ENCODE measurements at regions of chr13 and their contacts with region 1.

Region 1: GRCh38 chr13:50529154-50529882 is 314.2 kb downstream of the DLEU7 start:
- DNase-seq: peak; percentile 90
- ATAC-seq: peak; percentile 92 to 96

Region 2: GRCh38 chr13:50130123-50130946 is 399.0 kb before region 1 on chr13:
- intact Hi-C with region 1: loop called in 1 of 2 experiments (anchors 2 kb)
- DNase-seq: peak; percentile 50
- ATAC-seq: peak; percentile 23 to 38

Region 3: DNA sequence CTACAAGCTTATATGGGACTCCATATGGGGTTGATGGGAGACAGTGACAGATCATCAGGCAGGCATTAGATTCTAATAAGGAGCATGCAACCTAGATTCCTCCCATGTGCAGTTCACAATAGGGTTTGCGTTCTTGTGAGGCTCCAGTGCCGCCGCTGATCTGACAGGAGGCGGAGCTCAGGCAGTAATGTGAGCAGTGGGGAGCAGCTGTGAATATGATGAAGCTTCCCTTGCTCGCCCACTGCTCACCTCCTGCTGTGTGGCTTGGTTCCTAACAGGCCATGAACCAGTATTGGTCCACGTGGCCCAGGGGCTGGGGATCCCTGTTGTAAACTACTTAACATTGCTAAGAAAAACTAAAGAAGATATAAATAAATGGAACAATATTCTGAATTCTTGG is 135.7 kb before region 1 on chr13:
- intact Hi-C with region 1: loop called in 1 of 2 experiments (anchors 10 kb)
- DNase-seq: no peak
- ATAC-seq: no peak

Region 4: DNA sequence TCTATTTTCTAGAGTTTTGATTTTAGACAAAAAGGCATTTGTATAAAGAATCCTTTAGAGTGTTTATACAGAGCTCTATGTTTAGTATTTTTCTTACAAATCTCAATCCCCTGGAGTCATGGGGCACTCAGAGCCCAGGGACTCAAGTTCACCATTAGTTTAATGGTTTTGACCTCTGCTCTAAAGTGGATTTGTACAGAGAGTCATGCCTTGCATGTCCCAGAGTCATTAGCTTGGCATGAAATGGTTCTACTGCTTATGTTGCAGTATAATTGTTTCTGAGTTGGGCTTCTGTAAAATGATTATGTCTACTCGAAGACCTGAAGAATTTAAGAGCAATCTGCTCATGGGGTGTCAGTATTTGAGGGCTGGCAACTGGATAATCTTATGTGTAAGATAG is 92.1 kb before region 1 on chr13:
- intact Hi-C with region 1: no loop called
- DNase-seq: no peak
- ATAC-seq: peak in 1 of 2 donors; percentile 71

Region 5: GRCh38 chr13:50664951-50665350 is 135.6 kb after region 1 on chr13:
- intact Hi-C with region 1: no loop called
- DNase-seq: no peak
- ATAC-seq: no peak

Region 6: GRCh38 chr13:50801087-50801931 is 272.0 kb after region 1 on chr13:
- intact Hi-C with region 1: loop called in 1 of 2 experiments (anchors 5 kb)
- DNase-seq: peak; percentile 35
- ATAC-seq: peak; percentile 93 to 94

Measured in left cardiac atrium (tissue), 4 donors.